GM12878 (cell line): ENCODE measurements at regions of chr9 and their contacts with region 1.

Region 1: DNA sequence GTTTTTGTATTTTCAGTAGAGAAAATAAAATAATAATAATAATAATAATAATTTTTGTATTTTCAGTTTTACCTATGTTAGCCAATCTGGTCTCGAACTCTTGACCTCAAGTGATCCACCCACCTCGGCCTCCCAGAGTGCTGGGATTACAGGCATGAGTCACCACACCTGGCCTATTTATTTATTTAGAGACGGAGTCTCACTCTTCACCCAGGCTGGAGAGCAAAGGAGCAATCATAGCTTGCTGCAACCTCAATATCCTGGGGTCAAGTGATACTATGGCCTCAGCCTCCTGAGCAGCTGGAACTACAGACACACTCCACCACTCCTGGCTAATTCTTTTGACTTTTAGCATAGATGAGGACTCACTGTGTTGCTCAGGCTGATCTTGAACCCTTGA is 167.5 kb downstream of the TLE1 start:
- DNase-seq: no peak
- ATAC-seq: no peak
- H3K4me3 ChIP-seq: no peak overlapping the region
- H3K27ac ChIP-seq: no peak overlapping the region
- H3K4me1 ChIP-seq: no peaks in the 10 kb centered on the region
- H3K27me3 ChIP-seq: no peaks in the 10 kb centered on the region
- CTCF ChIP-seq: no peak
- EP300 ChIP-seq: no peak
- POLR2A ChIP-seq: no peak
- RAD21 ChIP-seq: no peak

Region 2: DNA sequence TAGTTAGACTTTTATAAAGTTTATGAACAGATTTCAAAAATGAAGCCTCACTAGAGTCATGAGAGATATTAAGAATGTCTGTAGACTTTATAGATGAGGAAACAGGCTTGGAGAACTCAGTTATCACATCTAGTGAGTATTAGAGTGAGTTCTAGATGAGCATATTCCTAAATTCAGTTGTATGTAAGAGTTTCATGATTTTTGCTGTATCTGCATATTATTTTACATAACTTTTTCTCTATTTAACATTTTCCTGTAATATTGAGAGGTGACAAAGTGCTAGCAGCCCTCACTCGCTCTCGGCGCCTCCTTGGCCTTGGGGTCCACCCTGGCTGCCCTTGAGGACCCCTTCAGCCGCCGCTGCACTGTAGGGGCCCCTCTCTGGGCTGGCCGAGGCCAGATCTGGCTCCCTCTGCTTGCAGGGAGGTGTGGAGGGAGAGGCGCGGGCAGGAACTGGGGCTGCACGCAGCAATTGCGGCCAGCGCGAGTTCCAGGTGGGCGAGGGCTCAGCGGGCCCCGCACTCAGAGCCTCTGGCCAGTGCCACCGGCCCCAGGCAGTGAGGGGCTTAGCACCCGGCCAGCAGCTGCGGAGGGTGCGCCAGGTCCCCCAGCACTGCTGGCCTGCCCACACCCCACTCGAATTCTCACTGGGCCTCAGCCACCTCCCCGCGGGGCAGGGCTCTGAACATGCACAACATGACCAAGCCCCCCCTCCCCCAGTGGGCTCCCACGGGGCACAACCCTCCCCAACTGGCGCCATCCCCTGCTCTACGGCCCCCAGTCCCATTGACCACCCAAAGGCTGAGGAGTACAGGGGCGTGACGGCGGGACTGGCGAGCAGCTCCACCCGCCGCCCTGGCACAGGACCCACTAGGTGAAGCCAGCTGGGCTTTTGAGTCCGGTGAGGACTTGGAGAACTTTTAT is 14.7 kb before region 1 on chr9:
- CTCF ChIA-PET with region 1: no interaction called
- POLR2A ChIA-PET with region 1: no interaction called
- RAD21 ChIA-PET with region 1: no interaction called
- SMC1A ChIA-PET with region 1: no interaction called
- in situ Hi-C with region 1: no loop called
- intact Hi-C with region 1: no loop called
- DNase-seq: no peak
- ATAC-seq: no peak
- H3K4me3 ChIP-seq: no peak overlapping the region
- H3K27ac ChIP-seq: no peak overlapping the region
- H3K4me1 ChIP-seq: no peaks in the 10 kb centered on the region
- H3K27me3 ChIP-seq: no peaks in the 10 kb centered on the region
- CTCF ChIP-seq: no peak
- EP300 ChIP-seq: no peak
- POLR2A ChIP-seq: no peak
- RAD21 ChIP-seq: no peak

Region 3: GRCh38 chr9:81689343-81690190 is 167.7 kb after region 1 on chr9 and contains the start of gene TLE1:
- CTCF ChIA-PET with region 1: no interaction called
- POLR2A ChIA-PET with region 1: no interaction called
- RAD21 ChIA-PET with region 1: no interaction called
- SMC1A ChIA-PET with region 1: no interaction called
- in situ Hi-C with region 1: no loop called
- intact Hi-C with region 1: loop called (anchors 5 kb)
- DNase-seq: peak; percentile 20
- ATAC-seq: no peak; the same call in 2 of the 3 replicates
- H3K4me3 ChIP-seq: peak within 1 kb of the TSS; percentile 36; the same call in 1 of the 2 replicates
- H3K27ac ChIP-seq: no peak within 1 kb of the TSS
- H3K4me1 ChIP-seq: no peaks in the 10 kb centered on the region
- H3K27me3 ChIP-seq: no peaks in the 10 kb centered on the region; a peak in 3 of 4 replicates
- CTCF ChIP-seq: no peak
- EP300 ChIP-seq: no peak
- POLR2A ChIP-seq: no peak
- RAD21 ChIP-seq: no peak
- polyA plus RNA-seq, gene TLE1: not detected

Region 4: GRCh38 chr9:81915801-81916505 is 394.1 kb after region 1 on chr9:
- CTCF ChIA-PET with region 1: no interaction called
- POLR2A ChIA-PET with region 1: no interaction called
- RAD21 ChIA-PET with region 1: no interaction called
- SMC1A ChIA-PET with region 1: no interaction called
- in situ Hi-C with region 1: no loop called
- intact Hi-C with region 1: no loop called
- DNase-seq: no peak
- ATAC-seq: no peak
- H3K4me3 ChIP-seq: no peak overlapping the region
- H3K27ac ChIP-seq: no peak overlapping the region
- H3K4me1 ChIP-seq: no peaks in the 10 kb centered on the region
- H3K27me3 ChIP-seq: no peaks in the 10 kb centered on the region
- CTCF ChIP-seq: no peak
- EP300 ChIP-seq: no peak
- POLR2A ChIP-seq: no peak
- RAD21 ChIP-seq: no peak

Region 5: GRCh38 chr9:82961504-82962125 is 1439.7 kb after region 1 on chr9:
- CTCF ChIA-PET with region 1: no interaction called
- POLR2A ChIA-PET with region 1: no interaction called
- RAD21 ChIA-PET with region 1: no interaction called
- SMC1A ChIA-PET with region 1: no interaction called
- in situ Hi-C with region 1: no loop called
- intact Hi-C with region 1: loop called (anchors 5 kb)
- DNase-seq: peak; percentile 11
- ATAC-seq: peak; percentile 95
- H3K4me3 ChIP-seq: no peak overlapping the region
- H3K27ac ChIP-seq: no peak overlapping the region
- H3K4me1 ChIP-seq: no peaks in the 10 kb centered on the region
- H3K27me3 ChIP-seq: no peaks in the 10 kb centered on the region
- CTCF ChIP-seq: peak; percentile 75 to 84 (median 80); a peak in 5 of 6 replicates
- EP300 ChIP-seq: no peak
- POLR2A ChIP-seq: no peak
- RAD21 ChIP-seq: peak; percentile 84